PC-9 (cell line): ENCODE measurements at regions of chr4 and their contacts with region 1.

Region 1: DNA sequence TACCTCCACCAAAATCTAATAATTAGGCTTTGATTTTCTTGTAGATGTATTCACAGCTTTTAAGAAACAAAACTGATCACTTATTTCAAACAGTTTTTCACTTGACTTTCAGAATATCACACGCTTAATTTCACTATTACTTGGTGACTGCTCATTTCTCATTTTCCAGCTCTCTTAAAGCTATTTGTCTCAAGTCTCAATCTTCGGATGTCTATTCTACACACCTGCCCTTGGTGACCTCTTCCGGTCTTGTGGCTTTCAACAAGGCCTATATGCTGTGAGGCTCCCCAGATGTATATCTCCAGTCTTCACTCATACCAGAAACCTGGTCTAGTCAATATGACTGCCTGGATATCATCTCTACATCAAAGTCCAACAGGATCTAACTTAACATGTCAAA is 34.9 kb upstream of the ANXA10 start:
- DNase-seq: no peak
- H3K4me3 ChIP-seq: no peak overlapping the region
- H3K27ac ChIP-seq: no peak overlapping the region
- H3K4me1 ChIP-seq: no peaks in the 10 kb centered on the region
- H3K27me3 ChIP-seq: no peaks in the 10 kb centered on the region
- CTCF ChIP-seq: no peak

Region 2: GRCh38 chr4:168098257-168098717 is 40.9 kb after region 1 on chr4:
- CTCF ChIA-PET with region 1: no interaction called
- POLR2A ChIA-PET with region 1: no interaction called
- intact Hi-C with region 1: loop called (anchors 1 kb)
- DNase-seq: peak in 1 of 2 experiments; percentile 77
- H3K4me3 ChIP-seq: no peak overlapping the region
- H3K27ac ChIP-seq: peak overlapping the region; percentile 65
- H3K4me1 ChIP-seq: peaks cover 40% of the 10 kb centered on the region
- H3K27me3 ChIP-seq: no peaks in the 10 kb centered on the region
- CTCF ChIP-seq: no peak

Region 3: DNA sequence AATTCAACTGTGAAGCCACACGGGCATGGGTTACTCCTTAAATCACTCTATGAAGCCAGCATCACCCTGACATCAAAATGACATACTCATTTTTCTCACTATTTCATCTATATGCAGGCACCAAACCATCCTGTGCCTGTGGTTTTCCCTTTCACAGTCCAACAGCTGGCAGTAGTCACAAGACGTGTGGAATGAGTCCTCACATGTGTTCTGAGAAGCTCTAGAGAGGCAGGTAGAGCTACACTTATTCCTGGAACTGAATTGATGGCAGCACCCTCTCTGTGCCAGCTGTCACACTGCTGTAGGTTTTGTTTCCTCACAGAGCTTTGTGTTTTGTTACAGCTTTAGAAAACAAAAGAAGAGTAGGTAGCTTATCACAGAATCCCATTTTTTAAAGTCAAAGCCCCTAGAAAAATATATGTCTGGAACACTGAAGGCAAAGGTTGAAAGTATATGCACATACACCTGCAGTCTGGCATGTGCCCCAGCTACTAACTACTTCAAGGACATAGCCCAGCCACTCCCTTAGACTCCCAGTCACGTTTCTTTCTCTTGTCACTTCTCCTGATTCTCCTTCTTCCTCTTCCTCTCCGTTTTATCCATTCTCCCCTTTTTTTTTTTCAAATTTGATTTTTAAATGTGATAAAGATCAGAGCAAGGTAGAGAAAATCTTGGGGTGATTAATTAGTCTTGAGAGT is 142.0 kb after region 1 on chr4:
- CTCF ChIA-PET with region 1: no interaction called
- POLR2A ChIA-PET with region 1: no interaction called
- intact Hi-C with region 1: no loop called
- DNase-seq: no peak
- H3K4me3 ChIP-seq: no peak overlapping the region
- H3K27ac ChIP-seq: no peak overlapping the region
- H3K4me1 ChIP-seq: no peaks in the 10 kb centered on the region; the same call in 1 of the 2 replicates
- H3K27me3 ChIP-seq: no peaks in the 10 kb centered on the region
- CTCF ChIP-seq: no peak

Region 4: GRCh38 chr4:168560184-168560827 is 502.9 kb after region 1 on chr4:
- CTCF ChIA-PET with region 1: no interaction called
- POLR2A ChIA-PET with region 1: no interaction called
- intact Hi-C with region 1: no loop called
- DNase-seq: peak; percentile 58 to 86
- H3K4me3 ChIP-seq: no peak overlapping the region
- H3K27ac ChIP-seq: peak overlapping the region; percentile 80
- H3K4me1 ChIP-seq: peaks cover 47% of the 10 kb centered on the region
- H3K27me3 ChIP-seq: no peaks in the 10 kb centered on the region
- CTCF ChIP-seq: no peak